A673 (cell line): ENCODE measurements at regions of chrX and their contacts with region 1.

Region 1: DNA sequence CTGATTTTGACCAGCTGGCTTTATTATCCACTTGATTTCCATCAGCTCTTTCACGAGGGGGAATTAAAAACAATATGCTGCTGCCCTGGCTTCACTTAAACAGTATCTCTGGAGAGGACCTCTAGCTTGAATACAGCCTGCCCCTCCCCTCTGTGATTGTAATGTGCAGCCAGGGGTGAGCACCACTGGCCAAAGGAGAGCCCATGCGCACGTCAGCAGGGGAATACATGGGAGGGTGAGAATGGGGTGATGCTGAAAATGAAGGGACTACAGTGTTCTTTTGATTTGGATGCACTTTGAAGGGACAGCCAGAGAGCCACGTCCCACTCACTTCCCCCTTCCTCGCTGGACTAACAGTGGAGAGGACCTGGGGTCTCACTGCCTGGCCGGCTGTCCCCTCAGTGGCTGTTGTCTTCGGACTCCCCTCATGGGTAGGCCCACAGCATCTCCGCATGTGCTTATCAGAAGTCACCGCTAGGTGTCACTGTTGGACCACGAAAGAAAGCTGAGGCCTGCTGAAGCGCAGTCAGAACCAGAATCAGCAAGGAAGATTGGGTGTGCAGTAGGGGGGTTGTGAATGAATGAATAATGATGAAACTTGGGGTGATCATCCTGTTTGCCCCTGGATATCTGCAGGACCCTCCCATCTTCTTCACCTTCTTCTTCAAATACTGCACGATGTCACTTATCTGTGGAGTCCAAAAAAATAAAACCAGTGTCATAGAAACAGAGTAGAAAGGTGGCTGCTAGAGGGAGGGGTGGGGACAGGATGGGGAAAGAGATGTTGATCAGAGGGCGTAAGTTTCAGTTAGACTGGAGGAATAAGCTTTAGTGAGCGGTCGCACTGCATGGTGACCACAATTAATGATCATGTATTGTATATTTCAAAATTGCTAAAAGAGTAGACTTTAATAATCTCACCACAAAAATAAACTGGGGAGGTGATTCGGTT is 32.8 kb downstream of the CLCN4 start:
- DNase-seq: peak; percentile 79
- H3K4me3 ChIP-seq: no peak overlapping the region
- H3K27ac ChIP-seq: no peak overlapping the region
- H3K4me1 ChIP-seq: no peaks in the 10 kb centered on the region
- H3K27me3 ChIP-seq: no peaks in the 10 kb centered on the region
- CTCF ChIP-seq: peak; percentile 84

Region 2: DNA sequence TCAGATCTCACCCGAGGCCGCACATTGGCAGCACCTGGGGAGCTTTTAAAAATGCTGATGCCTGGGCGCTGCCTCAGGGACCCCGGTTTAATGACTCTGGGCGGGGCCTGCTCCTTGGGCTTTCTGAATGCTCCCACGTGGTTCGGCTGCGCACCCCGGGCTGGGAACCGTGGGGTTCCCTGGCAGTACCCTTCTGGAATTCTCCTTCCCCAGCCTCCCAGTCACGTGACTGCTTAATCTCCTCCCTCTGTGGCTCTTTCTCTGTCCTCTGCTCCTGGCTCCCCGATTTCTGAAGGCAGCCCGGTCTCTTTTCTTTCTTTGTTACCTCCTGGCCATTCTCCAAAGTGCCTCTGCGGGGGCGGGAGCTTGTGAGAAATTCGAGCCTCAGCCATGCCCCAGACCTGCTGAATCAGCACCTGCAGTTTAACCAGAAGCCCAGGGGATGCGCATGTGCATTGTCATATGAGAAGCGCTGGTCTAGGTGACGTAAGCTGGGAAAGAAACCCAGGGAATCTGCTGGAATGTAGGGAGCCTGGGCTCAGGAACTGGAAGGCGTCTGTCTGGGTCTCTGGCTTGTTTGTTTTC is 16.2 kb before region 1 on chrX:
- CTCF ChIA-PET with region 1: no interaction called
- POLR2A ChIA-PET with region 1: no interaction called
- intact Hi-C with region 1: no loop called
- DNase-seq: peak; percentile 92
- H3K4me3 ChIP-seq: peak overlapping the region; percentile 11
- H3K27ac ChIP-seq: peak overlapping the region; percentile 40
- H3K4me1 ChIP-seq: peaks cover 5% of the 10 kb centered on the region
- H3K27me3 ChIP-seq: no peaks in the 10 kb centered on the region
- CTCF ChIP-seq: no peak

Region 3: GRCh38 chrX:10240918-10241317 is 51.3 kb after region 1 on chrX:
- CTCF ChIA-PET with region 1: no interaction called
- POLR2A ChIA-PET with region 1: no interaction called
- intact Hi-C with region 1: no loop called
- DNase-seq: no peak
- H3K4me3 ChIP-seq: no peak overlapping the region
- H3K27ac ChIP-seq: no peak overlapping the region
- H3K4me1 ChIP-seq: no peaks in the 10 kb centered on the region
- H3K27me3 ChIP-seq: no peaks in the 10 kb centered on the region
- CTCF ChIP-seq: no peak

Region 4: GRCh38 chrX:10326578-10326977 is 137.0 kb after region 1 on chrX:
- CTCF ChIA-PET with region 1: interaction called, 3 read pairs
- POLR2A ChIA-PET with region 1: no interaction called
- intact Hi-C with region 1: loop called (anchors 5 kb)
- DNase-seq: peak; percentile 23
- H3K4me3 ChIP-seq: no peak overlapping the region
- H3K27ac ChIP-seq: no peak overlapping the region
- H3K4me1 ChIP-seq: no peaks in the 10 kb centered on the region
- H3K27me3 ChIP-seq: no peaks in the 10 kb centered on the region
- CTCF ChIP-seq: peak; percentile 38

Region 5: GRCh38 chrX:10534611-10535010 is 345.0 kb after region 1 on chrX:
- CTCF ChIA-PET with region 1: no interaction called
- POLR2A ChIA-PET with region 1: no interaction called
- intact Hi-C with region 1: no loop called
- DNase-seq: no peak
- H3K4me3 ChIP-seq: no peak overlapping the region
- H3K27ac ChIP-seq: no peak overlapping the region
- H3K4me1 ChIP-seq: no peaks in the 10 kb centered on the region
- H3K27me3 ChIP-seq: no peaks in the 10 kb centered on the region
- CTCF ChIP-seq: no peak

Region 6: GRCh38 chrX:10615931-10616775 is 426.6 kb after region 1 on chrX:
- CTCF ChIA-PET with region 1: interaction called, 4 read pairs
- POLR2A ChIA-PET with region 1: no interaction called
- intact Hi-C with region 1: loop called (anchors 5 kb)
- DNase-seq: peak; percentile 58
- H3K4me3 ChIP-seq: no peak overlapping the region
- H3K27ac ChIP-seq: no peak overlapping the region
- H3K4me1 ChIP-seq: peaks cover 12% of the 10 kb centered on the region
- H3K27me3 ChIP-seq: no peaks in the 10 kb centered on the region
- CTCF ChIP-seq: peak; percentile 65

Region 7: GRCh38 chrX:10722851-10723250 is 533.3 kb after region 1 on chrX:
- CTCF ChIA-PET with region 1: interaction called, 5 read pairs
- POLR2A ChIA-PET with region 1: no interaction called
- intact Hi-C with region 1: loop called (anchors 1 kb)
- DNase-seq: peak; percentile 60
- H3K4me3 ChIP-seq: no peak overlapping the region
- H3K27ac ChIP-seq: no peak overlapping the region
- H3K4me1 ChIP-seq: no peaks in the 10 kb centered on the region
- H3K27me3 ChIP-seq: no peaks in the 10 kb centered on the region
- CTCF ChIP-seq: peak; percentile 85

Region 8: GRCh38 chrX:11100281-11101035 is 910.9 kb after region 1 on chrX:
- CTCF ChIA-PET with region 1: interaction called, 4 read pairs
- POLR2A ChIA-PET with region 1: no interaction called
- intact Hi-C with region 1: loop called (anchors 10 kb)
- DNase-seq: peak; percentile 55
- H3K4me3 ChIP-seq: no peak overlapping the region
- H3K27ac ChIP-seq: no peak overlapping the region
- H3K4me1 ChIP-seq: no peaks in the 10 kb centered on the region
- H3K27me3 ChIP-seq: no peaks in the 10 kb centered on the region
- CTCF ChIP-seq: peak; percentile 57

Region 9: DNA sequence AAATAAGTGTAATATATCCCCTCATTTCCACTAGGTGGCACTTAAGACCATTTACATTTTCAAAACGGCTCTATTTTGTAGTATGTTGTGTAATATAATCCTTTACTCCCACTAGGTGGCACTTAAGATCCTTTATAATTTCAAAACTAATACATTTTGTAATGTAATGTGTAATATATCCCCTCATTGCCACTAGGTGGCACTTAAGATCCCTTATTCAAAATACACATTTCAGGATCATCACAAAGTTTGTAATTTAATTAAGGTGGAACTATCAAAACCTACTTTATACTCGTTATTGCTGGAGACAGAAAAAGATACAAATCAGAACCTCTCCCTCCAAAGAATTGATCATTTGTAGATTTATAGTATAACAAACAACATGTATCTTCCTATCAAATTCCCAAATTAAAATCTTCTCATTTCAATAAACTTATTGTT is 1343.6 kb after region 1 on chrX:
- CTCF ChIA-PET with region 1: no interaction called
- POLR2A ChIA-PET with region 1: no interaction called
- intact Hi-C with region 1: loop called (anchors 5 kb)
- DNase-seq: peak; percentile 89
- H3K4me3 ChIP-seq: no peak overlapping the region
- H3K27ac ChIP-seq: no peak overlapping the region
- H3K4me1 ChIP-seq: no peaks in the 10 kb centered on the region
- H3K27me3 ChIP-seq: peaks cover 4% of the 10 kb centered on the region
- CTCF ChIP-seq: peak; percentile 96